K562 (cell line): ENCODE measurements at regions of chr4 and their contacts with region 1.

Region 1: DNA sequence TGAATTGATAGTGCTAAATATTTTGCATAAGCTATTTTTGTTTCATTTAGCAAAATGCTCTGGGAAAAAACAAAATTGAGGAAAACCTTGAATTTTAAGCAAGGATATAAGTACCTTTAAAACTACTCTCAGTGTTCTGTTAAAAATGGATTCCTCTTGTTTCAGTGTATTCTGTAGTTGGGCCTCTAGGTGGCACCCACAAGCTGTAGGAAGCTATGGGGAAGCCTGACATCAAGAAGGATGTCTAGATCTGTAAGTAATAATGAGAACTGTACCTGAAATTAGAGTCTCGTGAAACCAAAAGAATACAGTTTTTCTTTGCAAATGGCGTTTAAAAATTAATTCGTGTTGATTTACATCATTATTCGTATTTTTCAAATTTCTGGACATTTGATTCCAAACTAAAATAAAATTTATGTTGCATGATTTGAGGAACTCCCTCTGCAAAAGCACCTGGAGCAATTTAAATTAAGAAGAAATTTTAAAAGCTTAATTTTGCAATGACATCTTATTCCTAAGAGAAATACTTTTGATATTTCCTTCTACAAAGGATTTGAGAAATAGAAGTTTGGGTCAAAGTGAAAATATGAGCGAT is 51.2 kb downstream of the TMPRSS11E start:
- DNase-seq: peak; percentile 27 to 73 (median 28)
- ATAC-seq: peak; percentile 92
- H3K4me3 ChIP-seq: no peak overlapping the region
- H3K27ac ChIP-seq: no peak overlapping the region
- H3K4me1 ChIP-seq: no peaks in the 10 kb centered on the region
- H3K27me3 ChIP-seq: no peaks in the 10 kb centered on the region
- CTCF ChIP-seq: peak; percentile 63 to 84 (median 76); a peak in 5 of 6 replicates
- EP300 ChIP-seq: no peak
- POLR2A ChIP-seq: no peak
- RAD21 ChIP-seq: peak; percentile 93 to 97

Region 2: DNA sequence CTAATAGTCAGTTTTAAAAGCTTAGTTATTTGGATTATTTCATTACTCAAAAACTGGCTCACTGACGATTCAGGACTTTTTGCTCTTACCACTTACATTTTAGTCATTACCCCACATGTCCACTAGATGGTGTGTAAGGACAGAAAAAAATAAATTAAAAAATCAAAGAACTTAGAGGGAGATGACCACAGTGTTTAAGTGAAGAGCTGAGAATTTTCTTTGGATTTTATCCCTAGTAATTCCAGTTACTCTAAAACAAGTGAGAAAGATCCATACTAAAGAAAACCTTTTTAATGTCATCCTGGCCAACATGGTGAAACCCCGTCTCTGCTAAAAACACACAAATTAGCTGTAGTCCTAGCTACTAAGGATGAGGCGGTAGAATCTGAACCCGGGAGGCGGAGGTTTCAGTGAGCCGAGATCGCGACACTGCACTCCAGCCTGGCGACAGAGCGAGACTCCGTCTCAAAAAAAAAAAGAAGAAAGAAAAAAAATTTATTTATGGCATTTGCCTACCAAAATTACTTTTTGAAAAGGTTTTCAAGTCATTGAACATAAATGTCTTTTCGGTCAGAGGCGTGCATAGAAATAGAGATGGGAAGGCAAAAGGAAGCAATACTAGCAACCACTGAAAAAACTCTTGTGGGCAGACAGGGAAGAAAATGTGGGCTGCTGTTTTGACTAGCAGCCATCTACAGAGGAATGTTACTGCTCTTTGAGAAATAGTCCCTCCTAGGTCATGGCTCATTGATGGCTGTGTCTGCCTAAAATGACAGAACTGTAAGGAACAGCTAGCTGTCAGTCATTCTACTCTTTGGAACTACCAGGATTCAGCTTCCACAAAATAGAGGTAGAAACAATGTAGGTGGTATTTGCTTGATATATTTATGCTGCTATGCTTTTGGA is 226.4 kb before region 1 on chr4:
- CTCF ChIA-PET with region 1: no interaction called
- POLR2A ChIA-PET with region 1: no interaction called
- in situ Hi-C with region 1: no loop called
- intact Hi-C with region 1: loop called (anchors 5 kb)
- DNase-seq: peak; percentile 26 to 57 (median 29)
- ATAC-seq: peak; percentile 69
- H3K4me3 ChIP-seq: no peak overlapping the region
- H3K27ac ChIP-seq: no peak overlapping the region
- H3K4me1 ChIP-seq: peaks cover 0 to 5% of the 10 kb centered on the region in 2 experiments; a peak in 2 of 5 replicates
- H3K27me3 ChIP-seq: no peaks in the 10 kb centered on the region
- CTCF ChIP-seq: peak; percentile 35 to 70 (median 42); a peak in 4 of 6 replicates
- EP300 ChIP-seq: no peak
- POLR2A ChIP-seq: no peak
- RAD21 ChIP-seq: peak; percentile 77 to 79

Region 3: GRCh38 chr4:68673143-68673542 is 174.6 kb after region 1 on chr4:
- CTCF ChIA-PET with region 1: no interaction called
- POLR2A ChIA-PET with region 1: no interaction called
- in situ Hi-C with region 1: no loop called
- intact Hi-C with region 1: loop called (anchors 10 kb)
- DNase-seq: peak in 1 of 4 experiments; percentile 3
- ATAC-seq: no peak
- H3K4me3 ChIP-seq: no peak overlapping the region
- H3K27ac ChIP-seq: no peak overlapping the region
- H3K4me1 ChIP-seq: no peaks in the 10 kb centered on the region
- H3K27me3 ChIP-seq: no peaks in the 10 kb centered on the region; a peak in 1 of 5 replicates
- CTCF ChIP-seq: peak in 2 of 3 experiments; percentile 8 to 30; a peak in 2 of 6 replicates
- EP300 ChIP-seq: no peak
- POLR2A ChIP-seq: no peak
- RAD21 ChIP-seq: peak; percentile 62 to 71

Region 4: GRCh38 chr4:69025191-69025998 is 526.9 kb after region 1 on chr4:
- CTCF ChIA-PET with region 1: no interaction called
- POLR2A ChIA-PET with region 1: no interaction called
- in situ Hi-C with region 1: no loop called
- intact Hi-C with region 1: loop called (anchors 10 kb)
- DNase-seq: peak in 2 of 4 experiments; percentile 5 to 8
- ATAC-seq: no peak
- H3K4me3 ChIP-seq: no peak overlapping the region
- H3K27ac ChIP-seq: no peak overlapping the region
- H3K4me1 ChIP-seq: no peaks in the 10 kb centered on the region
- H3K27me3 ChIP-seq: no peaks in the 10 kb centered on the region
- CTCF ChIP-seq: peak in 1 of 3 experiments; percentile 18; a peak in 1 of 6 replicates
- EP300 ChIP-seq: no peak
- POLR2A ChIP-seq: no peak
- RAD21 ChIP-seq: peak in 1 of 2 experiments; percentile 60; a peak in 2 of 4 replicates

Region 5: DNA sequence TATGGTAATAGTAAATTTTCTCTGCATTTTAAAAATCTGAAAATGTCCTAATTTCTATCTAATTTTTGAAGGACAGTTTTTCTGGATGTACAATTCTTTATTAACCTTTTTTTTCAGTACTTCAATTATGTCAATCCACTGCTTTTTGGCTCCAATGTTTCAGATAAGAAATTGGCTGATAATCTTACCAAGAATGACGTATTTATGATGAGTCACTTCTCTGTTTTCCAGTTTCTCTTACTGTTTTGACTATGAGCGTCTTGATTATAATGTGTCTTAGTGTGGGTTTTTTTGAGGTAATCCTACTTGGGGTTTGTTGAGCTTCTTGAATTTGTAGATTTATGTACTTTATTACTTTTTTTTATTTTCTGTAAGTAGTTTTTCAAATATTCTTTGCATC is 668.8 kb after region 1 on chr4:
- CTCF ChIA-PET with region 1: no interaction called
- POLR2A ChIA-PET with region 1: no interaction called
- in situ Hi-C with region 1: no loop called
- intact Hi-C with region 1: loop called (anchors 1 kb)
- DNase-seq: no peak
- ATAC-seq: no peak
- H3K4me3 ChIP-seq: no peak overlapping the region
- H3K27ac ChIP-seq: no peak overlapping the region
- H3K4me1 ChIP-seq: no peaks in the 10 kb centered on the region
- H3K27me3 ChIP-seq: no peaks in the 10 kb centered on the region
- CTCF ChIP-seq: no peak
- EP300 ChIP-seq: no peak
- POLR2A ChIP-seq: no peak
- RAD21 ChIP-seq: no peak

Region 6: DNA sequence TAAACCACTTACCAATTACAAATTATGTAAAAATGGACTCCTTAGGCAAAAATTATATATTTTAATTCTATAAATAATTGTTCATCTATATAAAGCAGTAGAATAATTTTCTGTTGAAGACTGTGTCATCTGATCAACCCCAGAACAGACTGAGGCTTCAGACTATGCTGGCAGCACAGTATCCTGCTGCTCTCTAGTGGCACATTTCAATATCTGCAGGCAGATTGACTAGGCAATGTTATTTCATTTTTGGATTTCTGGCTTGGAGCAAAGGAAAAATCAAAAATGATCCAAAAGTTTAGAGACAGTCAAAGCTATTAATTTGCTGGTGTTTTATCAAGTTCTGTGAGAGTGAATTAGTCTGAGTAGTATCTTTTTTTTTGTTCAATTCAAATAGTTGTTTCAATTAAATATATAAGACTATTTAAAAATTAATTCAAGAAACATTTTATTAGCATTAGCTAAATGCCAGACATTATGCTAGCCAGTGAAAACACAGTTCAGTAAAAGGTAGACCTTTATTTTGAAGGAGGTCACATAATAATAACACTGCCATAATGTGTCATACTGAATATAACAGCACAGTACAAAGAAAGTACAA is 1382.8 kb after region 1 on chr4:
- CTCF ChIA-PET with region 1: no interaction called
- POLR2A ChIA-PET with region 1: no interaction called
- in situ Hi-C with region 1: no loop called
- intact Hi-C with region 1: loop called (anchors 5 kb)
- DNase-seq: peak; percentile 5 to 15 (median 10)
- ATAC-seq: no peak
- H3K4me3 ChIP-seq: no peak overlapping the region
- H3K27ac ChIP-seq: no peak overlapping the region
- H3K4me1 ChIP-seq: no peaks in the 10 kb centered on the region
- H3K27me3 ChIP-seq: no peaks in the 10 kb centered on the region
- CTCF ChIP-seq: peak; percentile 18 to 49 (median 30); a peak in 3 of 6 replicates
- EP300 ChIP-seq: no peak
- POLR2A ChIP-seq: no peak
- RAD21 ChIP-seq: peak; percentile 78 to 92